Ascending aorta (tissue), 2 donors: ENCODE measurements at regions of chr3 and their contacts with region 1.

Region 1: DNA sequence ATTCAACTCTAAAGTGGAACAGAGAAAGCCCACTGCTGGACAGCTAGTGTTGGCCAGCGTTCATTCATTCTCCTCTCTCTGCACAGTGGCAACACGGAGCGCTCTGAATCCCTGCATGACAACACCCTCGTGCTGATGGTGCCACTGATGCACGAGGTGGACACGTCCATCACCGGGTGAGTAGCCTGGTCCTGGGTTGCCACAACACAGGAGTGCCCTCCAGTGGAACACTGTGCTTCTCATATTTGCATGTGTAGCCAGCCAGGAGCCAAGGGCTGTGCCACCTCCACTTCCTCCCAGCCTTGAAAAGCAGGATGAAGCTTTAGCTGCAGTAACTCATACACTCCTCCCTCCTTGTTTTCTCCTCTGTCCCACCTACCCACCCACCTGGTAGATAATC is 120.0 kb upstream of the CTDSPL start:
- DNase-seq: peak in 1 of 2 donors; percentile 81
- H3K4me3 ChIP-seq: no peak overlapping the region
- H3K27ac ChIP-seq: peak overlapping the region; percentile 62 to 74
- H3K4me1 ChIP-seq: peaks cover 0 to 13% of the 10 kb centered on the region in 2 donors
- H3K27me3 ChIP-seq: no peaks in the 10 kb centered on the region
- CTCF ChIP-seq: peak; percentile 51 to 67 (median 66)

Region 2: DNA sequence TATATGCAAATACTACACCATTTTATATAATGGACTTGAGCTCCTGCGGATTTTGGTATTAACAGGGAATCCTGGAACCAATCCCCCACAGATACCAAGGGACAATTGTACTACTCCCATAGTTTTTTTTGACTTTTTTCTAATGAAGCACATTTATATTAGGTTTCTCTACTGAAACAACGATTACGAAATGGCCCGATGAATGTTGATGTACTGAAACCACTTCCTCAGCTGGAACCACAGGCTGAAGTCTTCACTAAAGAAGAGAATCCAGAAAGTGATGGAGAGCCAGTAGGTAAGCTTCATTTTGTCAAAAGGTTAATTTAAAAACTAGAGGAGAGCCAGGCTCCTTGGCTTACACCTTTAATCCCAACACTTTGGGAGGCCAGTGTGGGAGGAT is 445.7 kb before region 1 on chr3:
- intact Hi-C with region 1: no loop called
- DNase-seq: no peak
- H3K4me3 ChIP-seq: no peak overlapping the region
- H3K27ac ChIP-seq: no peak overlapping the region
- H3K4me1 ChIP-seq: no peaks in the 10 kb centered on the region
- H3K27me3 ChIP-seq: no peaks in the 10 kb centered on the region
- CTCF ChIP-seq: no peak

Region 3: GRCh38 chr3:37537914-37538691 is 203.5 kb before region 1 on chr3:
- intact Hi-C with region 1: loop called (anchors 5 kb)
- DNase-seq: peak in 1 of 2 donors; percentile 72
- H3K4me3 ChIP-seq: peak overlapping the region in 1 of 2 donors; percentile 12
- H3K27ac ChIP-seq: peak overlapping the region; percentile 71 to 73
- H3K4me1 ChIP-seq: peaks cover 8 to 32% of the 10 kb centered on the region in 2 donors
- H3K27me3 ChIP-seq: no peaks in the 10 kb centered on the region
- CTCF ChIP-seq: peak in 1 of 3 experiments; percentile 7

Region 4: GRCh38 chr3:37668431-37668817 is 73.2 kb before region 1 on chr3:
- intact Hi-C with region 1: no loop called
- DNase-seq: peak in 1 of 2 donors; percentile 78
- H3K4me3 ChIP-seq: peak overlapping the region; percentile 5 to 12
- H3K27ac ChIP-seq: peak overlapping the region; percentile 9 to 44
- H3K4me1 ChIP-seq: peaks cover 21 to 39% of the 10 kb centered on the region in 2 donors
- H3K27me3 ChIP-seq: no peaks in the 10 kb centered on the region
- CTCF ChIP-seq: no peak

Region 5: GRCh38 chr3:37787153-37787867 is 45.7 kb after region 1 on chr3:
- intact Hi-C with region 1: loop called (anchors 2 kb)
- DNase-seq: peak in 1 of 2 donors; percentile 53
- H3K4me3 ChIP-seq: peak overlapping the region in 1 of 2 donors; percentile 21
- H3K27ac ChIP-seq: peak overlapping the region; percentile 53 to 77
- H3K4me1 ChIP-seq: peaks cover 9 to 44% of the 10 kb centered on the region in 2 donors
- H3K27me3 ChIP-seq: no peaks in the 10 kb centered on the region
- CTCF ChIP-seq: no peak

Region 6: GRCh38 chr3:37814547-37814946 is 72.9 kb after region 1 on chr3:
- intact Hi-C with region 1: loop called (anchors 5 kb)
- DNase-seq: no peak
- H3K4me3 ChIP-seq: no peak overlapping the region
- H3K27ac ChIP-seq: peak overlapping the region; percentile 12 to 84
- H3K4me1 ChIP-seq: peaks cover 13 to 43% of the 10 kb centered on the region in 2 donors
- H3K27me3 ChIP-seq: no peaks in the 10 kb centered on the region
- CTCF ChIP-seq: peak in 2 of 3 experiments; percentile 22 to 49